ENCODE measurements at regions of chr14 and their contacts with region 1.

Region 1: DNA sequence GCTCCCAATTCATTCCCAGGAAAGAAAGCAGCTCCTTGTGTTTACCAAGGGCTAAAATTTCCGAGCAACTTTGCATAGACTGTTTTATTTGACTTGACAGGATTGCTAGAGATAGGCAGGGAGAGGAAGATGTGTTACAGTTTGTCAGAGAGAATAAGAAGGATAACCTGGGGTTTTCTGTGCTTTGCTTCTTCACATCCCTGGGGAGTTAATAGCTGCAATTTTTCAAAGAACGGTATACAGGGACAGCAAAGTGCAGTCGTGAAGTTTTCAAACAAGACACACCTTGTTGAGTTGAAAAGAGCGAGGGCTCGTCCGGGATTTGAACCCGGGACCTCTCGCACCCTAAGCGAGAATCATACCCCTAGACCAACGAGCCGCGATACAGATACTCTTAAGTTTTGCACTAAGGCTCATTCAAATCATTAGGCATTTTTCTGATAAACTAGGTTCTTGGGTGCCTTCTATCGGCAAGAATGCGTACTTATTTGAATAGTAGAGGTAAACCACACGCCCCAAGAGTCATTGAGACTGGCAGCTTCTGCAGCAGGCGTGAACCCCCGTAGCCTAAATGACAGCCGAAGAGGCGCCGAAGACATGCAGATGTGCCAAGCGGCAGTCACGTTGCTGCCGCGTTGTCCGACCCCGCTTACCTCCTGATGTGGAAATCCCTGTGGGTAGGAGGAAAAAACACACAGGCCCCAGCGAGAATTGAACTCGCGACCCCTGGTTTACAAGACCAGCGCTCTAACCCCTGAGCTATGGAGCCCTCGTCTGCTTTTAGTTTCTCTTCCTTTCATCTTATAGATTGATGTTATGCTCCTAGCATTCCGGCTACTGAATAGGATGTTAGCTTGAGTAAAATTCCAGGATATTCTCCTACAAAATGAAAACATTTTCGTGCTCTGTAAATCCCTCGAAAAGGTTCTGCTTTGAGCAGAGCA is 22.2 kb upstream of the RNASE12 start:
- DNase-seq: peak; percentile 61 to 95 (median 92)
- ATAC-seq: peak; percentile 89
- H3K4me3 ChIP-seq: peak overlapping the region; percentile 64
- H3K4me3 Mint-ChIP-seq: no peak overlapping the region
- H3K27ac ChIP-seq: peak overlapping the region; percentile 30
- H3K27ac Mint-ChIP-seq: no peak overlapping the region
- H3K4me1 ChIP-seq: peaks cover 20 to 29% of the 10 kb centered on the region in 2 donors
- H3K4me1 Mint-ChIP-seq: peaks cover 0 to 26% (median 4%) of the 10 kb centered on the region in 7 donors
- H3K27me3 ChIP-seq: no peaks in the 10 kb centered on the region
- H3K27me3 Mint-ChIP-seq: peaks cover 0 to 6% (median 0%) of the 10 kb centered on the region in 5 donors

Region 2: DNA sequence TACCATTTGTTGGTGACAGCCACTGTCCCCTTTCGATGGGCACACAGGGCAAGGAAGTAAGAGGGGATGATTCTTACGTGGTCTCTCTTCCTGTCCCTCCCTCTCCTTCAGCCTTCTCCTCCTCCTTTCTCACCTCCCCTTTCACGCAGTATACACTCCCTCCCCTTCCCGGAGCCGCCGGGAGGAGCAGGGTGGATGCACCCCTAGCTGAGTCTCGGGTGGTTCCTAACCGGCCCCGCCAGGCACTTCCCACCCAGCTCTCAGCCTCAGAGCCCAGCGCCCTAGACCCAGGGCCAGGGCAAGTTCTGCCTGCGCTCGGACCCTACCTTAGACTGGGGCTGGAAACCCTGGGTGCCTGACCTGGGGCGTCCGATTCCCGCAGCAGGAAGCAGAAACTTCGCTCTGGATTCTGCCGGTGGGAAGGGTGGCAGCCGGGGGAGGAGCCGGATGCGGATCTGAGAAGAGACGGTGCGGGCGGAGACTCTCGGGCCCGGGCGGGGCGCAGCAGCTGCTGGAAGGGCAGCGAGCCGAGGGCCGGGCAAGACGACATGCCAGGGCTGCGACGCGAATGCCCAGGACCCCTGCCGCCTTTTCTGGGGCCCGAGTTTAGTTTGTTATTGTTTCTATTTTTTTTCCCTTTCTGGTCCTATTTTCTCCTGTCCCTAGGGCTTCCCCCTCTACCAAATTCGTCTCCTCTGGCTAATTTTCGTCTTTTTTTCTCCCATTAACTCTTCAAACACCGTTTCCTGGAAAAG is 200.1 kb before region 1 on chr14 and contains the start of gene TEP1:
- CTCF ChIA-PET with region 1: interaction called, 19 read pairs
- POLR2A ChIA-PET with region 1: interaction called, 16 read pairs
- intact Hi-C with region 1: loop called (anchors 1 kb)
- DNase-seq: peak; percentile 46 to 75 (median 57)
- ATAC-seq: peak; percentile 80
- H3K4me3 ChIP-seq: peak within 1 kb of the TSS; percentile 71
- H3K4me3 Mint-ChIP-seq: peak within 1 kb of the TSS; percentile 94 to 100 (median 97)
- H3K27ac ChIP-seq: peak within 1 kb of the TSS; percentile 86
- H3K27ac Mint-ChIP-seq: peak within 1 kb of the TSS; percentile 90 to 99 (median 93)
- H3K4me1 ChIP-seq: peaks cover 8 to 17% of the 10 kb centered on the region in 2 donors
- H3K4me1 Mint-ChIP-seq: peaks cover 31 to 59% (median 46%) of the 10 kb centered on the region in 7 donors
- H3K27me3 ChIP-seq: no peaks in the 10 kb centered on the region
- H3K27me3 Mint-ChIP-seq: no peaks in the 10 kb centered on the region
- total RNA-seq, gene TEP1: 23.5 to 56.0 (median 43.6) TPM

Region 3: DNA sequence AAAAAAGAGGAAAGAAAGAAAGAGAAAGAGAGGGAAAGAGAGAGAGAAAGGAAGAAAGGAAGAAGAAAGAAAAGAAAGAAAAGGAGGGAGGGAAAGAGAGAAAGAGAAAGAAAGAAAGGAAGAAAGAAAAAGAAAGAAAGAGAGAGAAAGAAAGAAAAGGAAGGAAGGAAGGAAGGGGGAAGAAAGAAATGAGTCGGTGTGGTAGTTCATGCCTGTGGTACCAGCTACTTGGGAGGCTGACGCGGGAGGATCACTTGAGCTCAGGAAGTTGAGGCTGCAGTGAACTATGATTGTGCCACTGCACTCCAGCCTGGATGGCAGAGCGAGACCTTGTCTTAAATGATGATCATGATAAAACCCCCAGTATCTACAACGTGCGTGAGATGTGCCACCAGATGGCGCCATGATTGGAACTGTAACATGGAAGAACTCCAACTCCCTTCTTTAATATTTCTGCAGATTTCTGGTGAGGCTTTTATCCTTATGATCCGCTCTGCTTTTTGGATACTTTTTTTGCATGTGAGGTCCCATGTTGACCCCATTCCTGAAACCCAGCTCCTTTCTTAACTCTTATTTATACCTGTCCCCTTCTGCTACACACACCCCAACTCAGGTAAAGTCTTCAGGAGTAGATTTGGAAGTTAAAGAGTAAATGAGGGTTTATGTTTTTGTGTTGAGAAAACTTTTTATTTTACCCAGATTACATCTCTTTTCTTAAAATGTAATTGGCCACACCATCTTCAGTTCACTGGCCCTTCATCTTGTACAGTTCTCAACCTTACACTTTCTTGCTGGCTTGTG is 82.4 kb before region 1 on chr14:
- CTCF ChIA-PET with region 1: no interaction called
- POLR2A ChIA-PET with region 1: no interaction called
- intact Hi-C with region 1: loop called (anchors 1 kb)
- DNase-seq: peak; percentile 38 to 63 (median 47)
- ATAC-seq: peak; percentile 86
- H3K4me3 ChIP-seq: no peak overlapping the region
- H3K4me3 Mint-ChIP-seq: peak overlapping the region in 6 of 10 donors; percentile 26 to 66 (median 45)
- H3K27ac ChIP-seq: no peak overlapping the region
- H3K27ac Mint-ChIP-seq: peak overlapping the region in 1 of 9 donors; percentile 53
- H3K4me1 ChIP-seq: no peaks in the 10 kb centered on the region
- H3K4me1 Mint-ChIP-seq: peaks cover 2 to 19% (median 12%) of the 10 kb centered on the region in 7 donors
- H3K27me3 ChIP-seq: no peaks in the 10 kb centered on the region
- H3K27me3 Mint-ChIP-seq: peaks cover 0 to 52% (median 8%) of the 10 kb centered on the region in 5 donors

Region 4: GRCh38 chr14:20662968-20663732 is 49.8 kb after region 1 on chr14:
- CTCF ChIA-PET with region 1: interaction called, 3 read pairs
- POLR2A ChIA-PET with region 1: interaction called, 3 read pairs
- intact Hi-C with region 1: loop called in 1 of 2 experiments (anchors 1 kb)
- DNase-seq: peak; percentile 49 to 77 (median 66)
- ATAC-seq: peak; percentile 91
- H3K4me3 ChIP-seq: peak overlapping the region; percentile 59
- H3K4me3 Mint-ChIP-seq: peak overlapping the region; percentile 72 to 86 (median 79)
- H3K27ac ChIP-seq: no peak overlapping the region
- H3K27ac Mint-ChIP-seq: peak overlapping the region in 8 of 9 donors; percentile 18 to 74 (median 39)
- H3K4me1 ChIP-seq: peaks cover 3 to 17% of the 10 kb centered on the region in 2 donors
- H3K4me1 Mint-ChIP-seq: peaks cover 23 to 53% (median 25%) of the 10 kb centered on the region in 7 donors
- H3K27me3 ChIP-seq: no peaks in the 10 kb centered on the region
- H3K27me3 Mint-ChIP-seq: peaks cover 5 to 23% (median 19%) of the 10 kb centered on the region in 5 donors

Region 5: DNA sequence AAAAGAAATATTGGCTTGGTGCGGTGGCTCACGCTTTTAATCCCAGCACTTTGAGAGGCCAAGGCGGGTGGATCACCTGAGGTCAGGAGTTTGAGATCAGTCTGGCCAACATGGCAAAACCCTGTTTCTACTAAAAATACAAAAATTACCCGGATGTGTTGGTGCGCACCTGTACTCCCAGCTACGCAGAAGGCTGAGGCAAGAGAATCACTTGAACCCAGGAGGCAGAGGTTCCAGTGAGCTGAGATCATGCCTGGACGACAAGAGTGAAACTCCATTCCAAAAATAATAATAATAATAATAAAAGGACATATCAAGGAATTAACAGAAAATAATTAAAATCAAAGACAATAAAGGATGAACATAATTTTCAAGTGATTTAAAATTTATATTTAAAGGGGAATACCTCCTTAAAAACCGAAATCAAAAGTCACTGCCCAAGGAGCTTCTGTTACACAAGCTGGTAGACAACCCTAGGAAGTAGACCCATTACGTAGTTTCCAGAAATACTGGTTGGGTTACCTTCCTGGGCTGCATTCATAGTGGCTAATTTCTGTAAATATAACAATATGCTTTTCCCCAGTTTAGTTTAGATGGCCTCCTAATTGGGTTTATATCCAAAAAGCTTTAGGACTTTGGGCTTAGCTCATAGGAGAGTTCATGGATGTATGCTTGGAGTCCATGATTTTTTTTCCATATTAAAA is 130.0 kb after region 1 on chr14:
- CTCF ChIA-PET with region 1: no interaction called
- POLR2A ChIA-PET with region 1: no interaction called
- intact Hi-C with region 1: no loop called
- DNase-seq: no peak
- ATAC-seq: no peak
- H3K4me3 ChIP-seq: no peak overlapping the region
- H3K4me3 Mint-ChIP-seq: no peak overlapping the region
- H3K27ac ChIP-seq: no peak overlapping the region
- H3K27ac Mint-ChIP-seq: no peak overlapping the region
- H3K4me1 ChIP-seq: no peaks in the 10 kb centered on the region
- H3K4me1 Mint-ChIP-seq: no peaks in the 10 kb centered on the region
- H3K27me3 ChIP-seq: no peaks in the 10 kb centered on the region
- H3K27me3 Mint-ChIP-seq: peaks cover 2 to 9% (median 4%) of the 10 kb centered on the region in 5 donors

Region 6: DNA sequence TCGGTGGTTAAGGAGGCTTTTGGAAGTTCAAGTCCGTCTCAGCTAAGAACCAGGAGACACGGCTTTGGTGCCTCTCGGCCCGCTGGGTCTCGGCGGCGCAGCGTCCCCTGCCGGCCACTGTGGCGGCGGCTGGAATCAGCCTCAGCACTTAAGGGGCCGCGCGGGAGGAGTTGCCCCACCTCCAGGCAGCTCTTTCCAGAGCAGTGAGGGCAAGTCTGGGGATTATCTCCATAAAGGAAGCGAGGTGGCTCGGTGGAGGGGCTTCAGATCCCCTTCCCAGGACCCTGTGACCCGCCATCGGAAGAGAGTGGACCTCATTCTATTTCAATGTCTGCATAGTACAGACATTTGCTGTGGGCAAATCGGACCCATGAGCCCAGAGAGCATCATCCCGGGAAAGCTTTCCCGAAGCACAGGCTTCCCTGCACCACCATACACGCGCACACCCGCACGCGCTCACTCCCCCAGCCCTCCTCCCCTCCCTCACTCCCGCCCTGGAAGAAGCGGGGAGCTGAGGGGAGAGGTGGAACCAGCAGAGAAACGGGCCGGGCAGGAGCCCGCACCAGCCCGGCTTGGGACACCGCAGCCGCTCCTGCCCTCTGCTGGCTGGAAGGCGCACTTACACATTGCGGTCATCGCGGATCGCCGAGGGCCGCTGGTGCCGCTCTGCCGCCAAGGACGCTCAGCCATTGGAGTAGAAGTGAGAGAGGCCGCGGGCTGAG is 357.8 kb after region 1 on chr14:
- CTCF ChIA-PET with region 1: no interaction called
- POLR2A ChIA-PET with region 1: no interaction called
- intact Hi-C with region 1: loop called in 1 of 2 experiments (anchors 5 kb)
- DNase-seq: peak; percentile 59 to 84 (median 74)
- ATAC-seq: peak; percentile 95
- H3K4me3 ChIP-seq: peak overlapping the region; percentile 92
- H3K4me3 Mint-ChIP-seq: peak overlapping the region; percentile 88 to 95 (median 92)
- H3K27ac ChIP-seq: peak overlapping the region; percentile 25
- H3K27ac Mint-ChIP-seq: peak overlapping the region in 5 of 9 donors; percentile 15 to 85 (median 60)
- H3K4me1 ChIP-seq: peaks cover 0 to 5% of the 10 kb centered on the region in 2 donors
- H3K4me1 Mint-ChIP-seq: peaks cover 5 to 17% (median 13%) of the 10 kb centered on the region in 7 donors
- H3K27me3 ChIP-seq: peaks cover 0 to 3% of the 10 kb centered on the region in 2 donors
- H3K27me3 Mint-ChIP-seq: peaks cover 20 to 44% (median 25%) of the 10 kb centered on the region in 5 donors